CD4-positive, alpha-beta memory T cell (primary cell): ENCODE measurements at regions of chr10 and their contacts with region 1.

Region 1: GRCh38 chr10:62038609-62039190 is 137.2 kb downstream of the ARID5B start:
- DNase-seq: peak; percentile 74 to 81 (median 76)
- H3K4me3 ChIP-seq: peak overlapping the region in 1 of 2 donors; percentile 34
- H3K4me3 Mint-ChIP-seq: peak overlapping the region; percentile 48 to 89 (median 82)
- H3K27ac ChIP-seq: no peak overlapping the region
- H3K27ac Mint-ChIP-seq: peak overlapping the region; percentile 53 to 93 (median 78)
- H3K4me1 ChIP-seq: peaks cover 74% of the 10 kb centered on the region
- H3K4me1 Mint-ChIP-seq: peaks cover 60 to 78% (median 68%) of the 10 kb centered on the region in 4 donors
- H3K27me3 ChIP-seq: no peaks in the 10 kb centered on the region
- H3K27me3 Mint-ChIP-seq: no peaks in the 10 kb centered on the region

Region 2: GRCh38 chr10:61779950-61780659 is 258.6 kb before region 1 on chr10:
- CTCF ChIA-PET with region 1: no interaction called
- POLR2A ChIA-PET with region 1: no interaction called
- intact Hi-C with region 1: no loop called
- DNase-seq: peak in 4 of 5 donors; percentile 3 to 41 (median 9)
- H3K4me3 ChIP-seq: no peak overlapping the region
- H3K4me3 Mint-ChIP-seq: peak overlapping the region in 2 of 8 donors; percentile 12 to 54
- H3K27ac ChIP-seq: no peak overlapping the region
- H3K27ac Mint-ChIP-seq: peak overlapping the region in 2 of 7 donors; percentile 56 to 74
- H3K4me1 ChIP-seq: no peaks in the 10 kb centered on the region
- H3K4me1 Mint-ChIP-seq: peaks cover 4 to 17% (median 5%) of the 10 kb centered on the region in 4 donors
- H3K27me3 ChIP-seq: no peaks in the 10 kb centered on the region
- H3K27me3 Mint-ChIP-seq: peaks cover 0 to 2% of the 10 kb centered on the region in 2 donors

Region 3: DNA sequence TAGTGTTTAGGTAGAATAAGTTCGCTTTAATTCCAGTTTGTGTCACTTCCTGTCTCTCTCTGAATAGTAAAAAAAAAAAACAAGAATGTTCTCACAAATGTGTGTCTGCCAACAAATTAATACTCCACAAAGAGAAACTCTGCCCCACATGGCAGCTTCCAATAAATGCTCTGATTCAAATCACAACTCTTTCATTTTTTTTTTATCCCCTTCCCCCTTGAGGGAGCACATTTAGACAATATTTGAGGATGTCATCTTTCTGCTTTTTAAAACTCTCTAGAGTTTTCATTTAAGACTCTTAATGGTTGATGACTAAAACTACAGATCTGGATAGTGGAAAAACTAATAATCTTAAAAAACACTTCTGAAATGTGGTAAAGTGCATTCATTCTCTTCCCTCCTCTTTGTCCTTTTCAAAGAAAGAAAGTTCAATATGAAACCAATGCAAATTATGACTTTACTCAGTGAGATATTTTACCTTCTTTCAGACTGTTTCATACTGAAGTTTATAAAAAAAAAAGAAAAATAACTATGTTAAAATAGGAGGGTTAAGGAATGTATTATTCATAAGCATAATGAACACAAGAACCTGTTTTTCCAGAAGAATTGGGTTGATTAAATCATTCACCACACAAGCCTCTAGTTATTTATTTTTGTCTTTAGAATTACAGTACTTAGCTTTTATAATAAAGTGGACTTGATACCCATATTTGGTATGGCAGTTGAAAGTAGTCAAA is 94.9 kb before region 1 on chr10:
- CTCF ChIA-PET with region 1: interaction called, 21 read pairs
- POLR2A ChIA-PET with region 1: interaction called, 10 read pairs
- intact Hi-C with region 1: no loop called
- DNase-seq: peak in 4 of 5 donors; percentile 56 to 68 (median 60)
- H3K4me3 ChIP-seq: peak overlapping the region in 1 of 2 donors; percentile 25
- H3K4me3 Mint-ChIP-seq: peak overlapping the region; percentile 72 to 91 (median 84)
- H3K27ac ChIP-seq: peak overlapping the region; percentile 56
- H3K27ac Mint-ChIP-seq: peak overlapping the region; percentile 89 to 98 (median 95)
- H3K4me1 ChIP-seq: peaks cover 64% of the 10 kb centered on the region
- H3K4me1 Mint-ChIP-seq: peaks cover 35 to 61% (median 48%) of the 10 kb centered on the region in 4 donors
- H3K27me3 ChIP-seq: no peaks in the 10 kb centered on the region
- H3K27me3 Mint-ChIP-seq: no peaks in the 10 kb centered on the region

Region 4: DNA sequence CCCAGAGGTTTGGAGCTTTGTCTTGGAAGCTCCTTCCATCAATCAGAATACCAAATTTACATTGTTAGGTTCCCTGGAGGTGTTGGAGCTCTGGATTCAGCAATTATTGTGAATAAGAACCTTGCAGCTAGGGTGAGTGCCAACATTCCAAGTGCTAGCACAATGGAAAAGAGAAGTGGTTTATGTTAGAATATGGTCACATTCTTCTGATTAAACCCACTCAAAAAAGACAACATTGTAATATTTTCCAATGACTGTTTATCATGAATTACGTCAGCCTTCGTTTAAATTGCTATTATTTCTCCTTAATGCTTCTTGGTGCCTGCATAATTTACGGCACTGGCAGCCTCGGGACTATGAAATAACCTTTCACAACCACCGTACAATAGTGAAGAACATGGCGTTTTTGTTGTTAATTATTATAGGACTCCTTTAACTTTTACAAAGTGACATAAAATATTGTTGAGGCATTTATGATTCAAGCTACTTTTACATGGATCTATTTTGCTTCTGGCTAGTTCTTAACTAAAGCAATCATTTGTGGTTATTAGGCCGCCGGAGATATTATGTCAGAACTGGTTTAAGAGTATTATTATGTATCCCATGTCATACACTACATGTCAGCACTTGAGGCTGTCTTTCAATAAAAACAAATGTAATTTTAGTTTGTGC is 19.6 kb before region 1 on chr10:
- CTCF ChIA-PET with region 1: interaction called, 76 read pairs
- POLR2A ChIA-PET with region 1: interaction called, 4 read pairs
- intact Hi-C with region 1: loop called (anchors 1 kb)
- DNase-seq: no peak
- H3K4me3 ChIP-seq: no peak overlapping the region
- H3K4me3 Mint-ChIP-seq: peak overlapping the region in 4 of 8 donors; percentile 0 to 66 (median 27)
- H3K27ac ChIP-seq: no peak overlapping the region
- H3K27ac Mint-ChIP-seq: peak overlapping the region in 5 of 7 donors; percentile 3 to 87 (median 68)
- H3K4me1 ChIP-seq: peaks cover 67% of the 10 kb centered on the region
- H3K4me1 Mint-ChIP-seq: peaks cover 49 to 82% (median 67%) of the 10 kb centered on the region in 4 donors
- H3K27me3 ChIP-seq: no peaks in the 10 kb centered on the region
- H3K27me3 Mint-ChIP-seq: no peaks in the 10 kb centered on the region

Region 5: DNA sequence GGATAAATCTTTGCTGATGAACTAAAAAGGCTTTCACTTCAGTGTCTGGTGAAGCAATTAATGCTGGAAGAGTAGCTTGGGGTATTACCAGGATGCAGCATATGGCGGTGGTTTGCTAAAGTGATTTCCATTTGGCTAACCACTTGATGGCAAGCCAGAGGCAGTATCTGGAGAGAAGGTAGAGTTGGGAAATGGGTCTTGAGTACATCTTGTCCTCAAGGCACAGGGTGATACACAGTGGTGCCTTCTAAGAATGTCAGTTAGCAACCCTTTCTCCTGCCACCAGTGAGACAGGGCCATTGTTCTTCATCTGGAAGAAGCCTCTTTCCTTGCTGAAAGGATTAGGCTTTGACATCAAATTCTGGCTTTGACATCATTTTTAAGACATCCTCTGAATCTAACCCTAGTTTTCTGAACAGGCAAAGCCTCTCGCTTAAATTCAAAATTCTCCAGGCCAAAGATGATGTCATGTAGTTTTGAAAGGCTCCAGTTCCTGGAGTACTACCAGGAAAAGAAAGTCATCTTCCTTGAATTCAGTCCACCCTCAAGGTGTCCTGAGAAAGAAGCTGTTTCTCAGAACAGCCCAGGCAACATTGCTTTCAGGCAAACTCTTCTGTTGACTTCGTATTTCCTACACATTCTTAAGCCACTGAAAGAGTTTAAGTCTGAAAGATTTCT is 25.2 kb after region 1 on chr10:
- CTCF ChIA-PET with region 1: interaction called, 21 read pairs
- POLR2A ChIA-PET with region 1: interaction called, 86 read pairs
- intact Hi-C with region 1: no loop called
- DNase-seq: no peak
- H3K4me3 ChIP-seq: no peak overlapping the region
- H3K4me3 Mint-ChIP-seq: peak overlapping the region in 4 of 8 donors; percentile 1 to 15 (median 9)
- H3K27ac ChIP-seq: no peak overlapping the region
- H3K27ac Mint-ChIP-seq: peak overlapping the region in 6 of 7 donors; percentile 15 to 91 (median 65)
- H3K4me1 ChIP-seq: peaks cover 52% of the 10 kb centered on the region
- H3K4me1 Mint-ChIP-seq: peaks cover 40 to 80% (median 60%) of the 10 kb centered on the region in 4 donors
- H3K27me3 ChIP-seq: no peaks in the 10 kb centered on the region
- H3K27me3 Mint-ChIP-seq: no peaks in the 10 kb centered on the region

Region 6: DNA sequence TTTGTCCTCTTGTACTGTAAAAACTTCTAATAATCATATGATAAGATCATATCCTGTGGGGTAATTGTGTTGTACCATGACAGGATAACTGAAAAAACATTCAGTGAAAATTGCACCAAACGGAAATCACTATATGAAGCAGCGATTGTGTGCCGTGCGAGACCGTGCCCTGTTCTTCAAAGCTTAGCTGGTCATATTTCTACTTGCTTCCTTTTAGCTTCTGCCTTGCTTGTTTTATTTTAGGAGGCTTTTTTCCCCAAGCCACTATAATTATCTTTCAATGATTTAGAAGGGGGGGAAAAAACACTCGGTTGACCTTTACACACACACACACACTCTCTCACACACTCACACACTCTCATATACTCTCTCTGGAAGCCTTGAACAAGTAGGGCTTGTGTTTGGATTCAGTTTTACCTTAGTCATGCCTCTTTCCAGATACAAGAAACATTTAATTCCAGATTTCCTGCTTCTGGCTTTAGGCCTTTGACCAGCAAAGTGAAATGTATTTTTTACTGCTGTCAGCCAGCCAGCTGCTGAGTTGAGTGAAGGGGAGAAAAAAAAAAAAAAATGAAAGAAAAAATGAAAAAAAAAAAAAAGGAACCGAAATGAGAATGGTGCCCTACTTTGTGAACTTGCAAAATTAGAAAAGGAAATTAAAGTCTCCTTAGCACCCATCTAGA is 44.2 kb after region 1 on chr10:
- CTCF ChIA-PET with region 1: interaction called, 10 read pairs
- POLR2A ChIA-PET with region 1: interaction called, 133 read pairs
- intact Hi-C with region 1: loop called (anchors 1 kb)
- DNase-seq: peak; percentile 58 to 74 (median 64)
- H3K4me3 ChIP-seq: peak overlapping the region in 1 of 2 donors; percentile 3
- H3K4me3 Mint-ChIP-seq: peak overlapping the region; percentile 58 to 83 (median 73)
- H3K27ac ChIP-seq: peak overlapping the region; percentile 45
- H3K27ac Mint-ChIP-seq: peak overlapping the region; percentile 24 to 95 (median 89)
- H3K4me1 ChIP-seq: peaks cover 79% of the 10 kb centered on the region
- H3K4me1 Mint-ChIP-seq: peaks cover 44 to 77% (median 62%) of the 10 kb centered on the region in 4 donors
- H3K27me3 ChIP-seq: no peaks in the 10 kb centered on the region
- H3K27me3 Mint-ChIP-seq: no peaks in the 10 kb centered on the region

Region 7: GRCh38 chr10:62194924-62195674 is 156.4 kb after region 1 on chr10:
- CTCF ChIA-PET with region 1: interaction called, 16 read pairs
- POLR2A ChIA-PET with region 1: interaction called, 5 read pairs
- intact Hi-C with region 1: loop called (anchors 1 kb)
- DNase-seq: no peak
- H3K4me3 ChIP-seq: no peak overlapping the region
- H3K4me3 Mint-ChIP-seq: peak overlapping the region in 1 of 8 donors; percentile 21
- H3K27ac ChIP-seq: no peak overlapping the region
- H3K27ac Mint-ChIP-seq: peak overlapping the region in 3 of 7 donors; percentile 60 to 83 (median 82)
- H3K4me1 ChIP-seq: peaks cover 30% of the 10 kb centered on the region
- H3K4me1 Mint-ChIP-seq: peaks cover 12 to 20% (median 13%) of the 10 kb centered on the region in 4 donors
- H3K27me3 ChIP-seq: no peaks in the 10 kb centered on the region
- H3K27me3 Mint-ChIP-seq: no peaks in the 10 kb centered on the region

Region 8: GRCh38 chr10:62422068-62422590 is 383.4 kb after region 1 on chr10:
- CTCF ChIA-PET with region 1: interaction called, 3 read pairs
- POLR2A ChIA-PET with region 1: no interaction called
- intact Hi-C with region 1: loop called (anchors 2 kb)
- DNase-seq: no peak
- H3K4me3 ChIP-seq: no peak overlapping the region
- H3K4me3 Mint-ChIP-seq: no peak overlapping the region
- H3K27ac ChIP-seq: no peak overlapping the region
- H3K27ac Mint-ChIP-seq: no peak overlapping the region
- H3K4me1 ChIP-seq: no peaks in the 10 kb centered on the region
- H3K4me1 Mint-ChIP-seq: no peaks in the 10 kb centered on the region
- H3K27me3 ChIP-seq: no peaks in the 10 kb centered on the region
- H3K27me3 Mint-ChIP-seq: peaks cover 0 to 3% of the 10 kb centered on the region in 2 donors